ENCODE measurements at regions of chr9 and their contacts with region 1.

Region 1: GRCh38 chr9:84261082-84261746 is 79.3 kb downstream of the SLC28A3 start:
- DNase-seq: peak; percentile 68 to 89 (median 84)
- H3K4me3 ChIP-seq: peak overlapping the region in 42 of 59 donors; percentile 0 to 57 (median 35)
- H3K27ac ChIP-seq: peak overlapping the region in 1 of 59 donors; percentile 28
- H3K27me3 ChIP-seq: peaks cover 0 to 10% (median 0%) of the 10 kb centered on the region in 45 donors
- CTCF ChIP-seq: peak; percentile 77 to 99 (median 93)

Region 2: GRCh38 chr9:83617299-83617698 is 643.9 kb before region 1 on chr9:
- intact Hi-C with region 1: loop called in 1 of 2 experiments (anchors 5 kb)
- DNase-seq: no peak
- H3K4me3 ChIP-seq: no peak overlapping the region
- H3K27ac ChIP-seq: no peak overlapping the region
- H3K27me3 ChIP-seq: no peaks in the 10 kb centered on the region
- CTCF ChIP-seq: no peak